ENCODE measurements at regions of chr20 and their contacts with region 1.

Region 1: GRCh38 chr20:35994994-35995453 is 26.6 kb downstream of the CNBD2 start:
- DNase-seq: peak; percentile 86
- H3K4me3 Mint-ChIP-seq: no peak overlapping the region
- H3K27ac Mint-ChIP-seq: no peak overlapping the region
- H3K4me1 Mint-ChIP-seq: peaks cover 4% of the 10 kb centered on the region
- H3K27me3 Mint-ChIP-seq: no peaks in the 10 kb centered on the region

Region 2: GRCh38 chr20:35788796-35789195 is 206.2 kb before region 1 on chr20:
- CTCF ChIA-PET with region 1: no interaction called
- POLR2A ChIA-PET with region 1: no interaction called
- intact Hi-C with region 1: no loop called
- DNase-seq: no peak
- H3K4me3 Mint-ChIP-seq: no peak overlapping the region
- H3K27ac Mint-ChIP-seq: no peak overlapping the region
- H3K4me1 Mint-ChIP-seq: peaks cover 9% of the 10 kb centered on the region
- H3K27me3 Mint-ChIP-seq: no peaks in the 10 kb centered on the region

Region 3: DNA sequence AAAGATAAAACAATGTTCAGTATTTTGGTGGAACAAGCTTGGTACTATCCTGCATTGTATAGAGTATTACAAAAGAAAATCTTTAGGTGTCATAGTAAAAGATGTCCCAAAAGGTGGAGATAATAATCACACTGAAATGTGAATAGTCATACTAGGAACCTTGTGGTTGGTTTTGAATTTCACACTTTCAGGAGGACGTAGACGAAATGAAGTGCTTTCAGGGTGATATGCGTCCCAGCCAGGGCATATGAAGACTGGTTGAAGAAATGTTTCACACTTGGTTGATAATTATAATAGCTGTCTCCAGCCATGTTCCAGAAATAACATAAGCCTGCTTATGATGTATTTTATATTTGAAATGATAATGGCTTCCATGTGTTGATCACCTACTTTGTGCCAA is 101.1 kb before region 1 on chr20:
- CTCF ChIA-PET with region 1: no interaction called
- POLR2A ChIA-PET with region 1: no interaction called
- intact Hi-C with region 1: no loop called
- DNase-seq: peak; percentile 28
- H3K4me3 Mint-ChIP-seq: no peak overlapping the region
- H3K27ac Mint-ChIP-seq: no peak overlapping the region
- H3K4me1 Mint-ChIP-seq: peaks cover 20% of the 10 kb centered on the region
- H3K27me3 Mint-ChIP-seq: no peaks in the 10 kb centered on the region

Region 4: DNA sequence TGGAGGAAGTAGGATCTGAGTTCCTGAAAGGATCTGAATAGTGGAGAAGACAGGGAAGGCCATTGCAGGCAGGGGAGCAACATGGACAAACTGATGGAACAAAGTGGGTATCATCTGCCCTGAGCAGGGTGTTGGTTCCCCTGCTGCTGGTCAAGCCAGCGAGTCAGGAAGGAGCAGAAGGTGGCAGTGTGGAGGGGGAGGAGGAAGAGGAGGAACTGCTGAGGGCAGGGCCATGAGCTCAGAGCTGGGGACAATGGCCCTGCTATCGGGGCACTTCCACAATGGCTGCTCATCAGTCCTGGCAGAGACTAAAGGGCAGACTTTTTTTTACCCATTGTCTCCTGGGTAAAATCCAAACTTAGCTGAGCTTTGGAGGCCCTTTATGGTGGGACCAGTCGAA is 13.1 kb before region 1 on chr20:
- CTCF ChIA-PET with region 1: interaction called, 62 read pairs
- POLR2A ChIA-PET with region 1: no interaction called
- intact Hi-C with region 1: no loop called
- DNase-seq: no peak
- H3K4me3 Mint-ChIP-seq: no peak overlapping the region
- H3K27ac Mint-ChIP-seq: no peak overlapping the region
- H3K4me1 Mint-ChIP-seq: no peaks in the 10 kb centered on the region
- H3K27me3 Mint-ChIP-seq: peaks cover 4% of the 10 kb centered on the region

Region 5: DNA sequence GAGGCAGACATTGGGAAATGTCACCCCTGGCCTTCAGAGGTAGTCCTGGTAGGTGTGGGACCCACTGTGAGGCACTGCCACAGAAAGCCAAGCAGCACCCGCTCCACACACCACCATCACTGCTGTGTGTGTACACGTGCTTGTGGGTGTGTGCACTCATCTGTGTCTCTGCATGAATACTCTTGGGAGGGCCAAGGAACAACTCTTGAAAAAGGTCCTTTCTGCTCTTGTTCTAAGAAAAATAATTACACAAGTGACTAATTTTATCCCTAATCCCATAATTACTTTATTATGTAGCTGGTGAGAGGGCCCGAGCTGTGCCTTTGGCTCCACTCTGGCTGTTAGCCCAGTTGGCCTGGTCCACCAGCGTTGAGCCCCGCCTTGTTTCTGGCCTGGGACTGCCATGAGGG is 137.8 kb after region 1 on chr20:
- CTCF ChIA-PET with region 1: interaction called, 483 read pairs
- POLR2A ChIA-PET with region 1: no interaction called
- intact Hi-C with region 1: loop called (anchors 1 kb)
- DNase-seq: no peak
- H3K4me3 Mint-ChIP-seq: no peak overlapping the region
- H3K27ac Mint-ChIP-seq: no peak overlapping the region
- H3K4me1 Mint-ChIP-seq: no peaks in the 10 kb centered on the region
- H3K27me3 Mint-ChIP-seq: no peaks in the 10 kb centered on the region

Region 6: DNA sequence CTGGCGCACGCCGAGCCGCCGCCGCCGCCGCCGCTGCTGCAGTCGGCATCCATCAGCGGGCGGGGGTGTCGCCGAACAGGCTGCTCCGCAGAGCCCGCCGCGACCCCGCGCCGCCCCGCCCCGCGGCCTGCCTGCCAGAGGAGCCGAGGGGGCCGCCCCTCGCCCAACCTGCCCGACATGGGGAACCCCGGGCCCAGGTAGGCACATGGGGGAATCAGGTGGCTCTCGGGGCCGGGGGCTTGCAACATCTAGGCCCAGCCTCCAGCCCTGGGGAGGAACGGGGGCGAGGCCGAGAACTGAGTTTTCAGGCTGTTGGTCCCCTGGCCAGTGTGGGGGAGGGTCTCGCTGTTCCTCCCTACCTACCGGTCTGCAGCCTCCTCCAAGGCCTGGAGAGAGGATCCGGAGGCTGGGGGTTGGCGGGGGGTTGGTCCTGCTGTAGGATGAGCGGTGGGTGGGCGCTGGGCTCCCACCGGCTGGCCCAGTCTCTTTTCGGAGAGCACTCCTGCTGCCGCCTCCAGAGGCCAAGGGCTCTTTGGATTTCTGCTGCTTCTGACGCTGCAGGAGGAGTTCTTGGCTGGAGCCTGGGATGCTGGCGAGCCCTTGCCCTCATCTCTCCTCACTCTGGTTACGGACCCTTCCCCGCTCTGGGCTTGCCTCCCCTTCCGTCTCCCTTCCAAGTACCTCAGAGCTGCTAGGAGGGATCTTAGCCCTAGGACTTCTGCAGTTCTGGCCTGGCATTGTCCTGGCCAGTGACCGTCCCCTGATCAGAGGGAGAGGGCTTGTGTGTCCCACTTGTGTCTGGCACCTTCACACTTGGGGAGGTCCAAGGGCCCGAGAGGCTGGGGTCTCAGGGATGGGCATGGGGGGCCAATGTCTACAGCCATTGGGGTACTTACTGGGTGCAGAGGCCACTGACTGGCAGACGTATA is 159.9 kb after region 1 on chr20 and contains the start of gene EPB41L1:
- CTCF ChIA-PET with region 1: interaction called, 20 read pairs
- POLR2A ChIA-PET with region 1: no interaction called
- intact Hi-C with region 1: no loop called
- DNase-seq: no peak
- H3K4me3 Mint-ChIP-seq: no peak within 1 kb of the TSS
- H3K27ac Mint-ChIP-seq: no peak within 1 kb of the TSS
- H3K4me1 Mint-ChIP-seq: no peaks in the 10 kb centered on the region
- H3K27me3 Mint-ChIP-seq: peaks cover 20% of the 10 kb centered on the region
- total RNA-seq, gene EPB41L1: 0.36 to 0.88 TPM

Region 7: DNA sequence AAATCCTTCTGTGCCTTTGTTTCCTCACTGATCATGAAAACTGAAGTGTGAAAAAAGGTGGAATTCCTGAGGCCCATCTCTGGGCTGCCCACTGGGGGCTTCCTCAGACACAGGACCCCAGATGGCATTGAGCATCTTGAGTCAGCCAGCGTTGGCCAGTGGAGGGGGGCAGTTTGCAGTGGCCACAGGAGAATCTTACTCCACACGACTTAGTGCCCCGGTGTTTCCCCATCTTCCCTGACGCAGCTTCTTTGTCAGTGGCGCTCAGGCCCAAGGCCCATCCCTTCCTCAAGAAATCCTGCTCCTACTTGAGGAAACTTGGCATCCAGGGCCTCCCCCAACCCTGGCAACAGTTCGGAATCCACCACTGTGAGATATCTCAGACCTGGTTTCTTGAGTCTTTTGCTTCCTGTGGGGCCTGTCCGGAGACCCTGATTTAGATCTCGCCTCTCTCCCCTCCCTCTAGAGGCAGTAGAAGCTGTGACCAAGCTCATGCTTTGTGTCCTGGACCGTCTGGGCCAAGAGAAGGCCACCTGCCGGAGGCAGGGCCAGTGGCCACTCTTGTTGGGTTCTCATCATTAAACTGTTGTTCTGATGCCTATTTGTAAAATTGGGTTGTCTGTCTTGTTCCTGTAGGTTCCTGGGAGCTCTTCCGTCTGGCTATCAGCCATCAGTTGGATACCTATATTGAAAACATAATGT is 290.9 kb after region 1 on chr20:
- CTCF ChIA-PET with region 1: no interaction called
- POLR2A ChIA-PET with region 1: no interaction called
- intact Hi-C with region 1: no loop called
- DNase-seq: no peak
- H3K4me3 Mint-ChIP-seq: no peak overlapping the region
- H3K27ac Mint-ChIP-seq: no peak overlapping the region
- H3K4me1 Mint-ChIP-seq: no peaks in the 10 kb centered on the region
- H3K27me3 Mint-ChIP-seq: peaks cover 10% of the 10 kb centered on the region

Region 8: GRCh38 chr20:36439040-36439730 is 444.2 kb after region 1 on chr20:
- CTCF ChIA-PET with region 1: interaction called, 7 read pairs
- POLR2A ChIA-PET with region 1: no interaction called
- intact Hi-C with region 1: loop called (anchors 5 kb)
- DNase-seq: peak; percentile 75
- H3K4me3 Mint-ChIP-seq: peak overlapping the region; percentile 18
- H3K27ac Mint-ChIP-seq: no peak overlapping the region
- H3K4me1 Mint-ChIP-seq: peaks cover 2% of the 10 kb centered on the region
- H3K27me3 Mint-ChIP-seq: peaks cover 1% of the 10 kb centered on the region

Measured in activated CD4-positive, alpha-beta memory T cell treated with anti-CD3 and anti-CD28 coated beads for 36 hours (primary cell).